ENCODE measurements at regions of chr10 and their contacts with region 1.

Region 1: DNA sequence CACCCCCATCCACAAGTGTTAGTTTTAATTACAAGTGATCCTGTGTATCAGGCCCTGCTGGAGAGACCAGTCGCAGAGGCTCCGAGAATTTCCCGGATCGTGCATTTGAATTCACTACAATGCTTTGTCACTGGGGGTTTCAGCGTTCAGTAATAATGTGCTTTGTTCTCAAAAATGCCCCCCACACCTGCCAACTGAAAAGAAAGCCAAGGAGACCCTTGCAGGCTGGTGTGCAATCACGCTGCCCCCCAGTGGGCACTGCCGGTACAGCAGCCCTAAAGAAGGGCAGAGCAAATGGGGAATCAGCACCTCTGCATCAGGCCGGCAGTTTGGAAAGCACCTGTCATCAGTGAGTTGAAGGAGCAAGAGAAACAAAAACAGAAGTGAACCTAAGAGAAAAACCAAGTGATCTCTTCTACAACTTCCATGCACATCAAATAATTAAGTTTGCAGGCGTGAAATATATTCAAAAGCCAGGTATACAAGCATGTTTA is 177.6 kb downstream of the PARD3 start:
- DNase-seq: no peak
- H3K4me3 ChIP-seq: no peak overlapping the region
- H3K27me3 ChIP-seq: no peaks in the 10 kb centered on the region
- CTCF ChIP-seq: peak; percentile 99

Region 2: DNA sequence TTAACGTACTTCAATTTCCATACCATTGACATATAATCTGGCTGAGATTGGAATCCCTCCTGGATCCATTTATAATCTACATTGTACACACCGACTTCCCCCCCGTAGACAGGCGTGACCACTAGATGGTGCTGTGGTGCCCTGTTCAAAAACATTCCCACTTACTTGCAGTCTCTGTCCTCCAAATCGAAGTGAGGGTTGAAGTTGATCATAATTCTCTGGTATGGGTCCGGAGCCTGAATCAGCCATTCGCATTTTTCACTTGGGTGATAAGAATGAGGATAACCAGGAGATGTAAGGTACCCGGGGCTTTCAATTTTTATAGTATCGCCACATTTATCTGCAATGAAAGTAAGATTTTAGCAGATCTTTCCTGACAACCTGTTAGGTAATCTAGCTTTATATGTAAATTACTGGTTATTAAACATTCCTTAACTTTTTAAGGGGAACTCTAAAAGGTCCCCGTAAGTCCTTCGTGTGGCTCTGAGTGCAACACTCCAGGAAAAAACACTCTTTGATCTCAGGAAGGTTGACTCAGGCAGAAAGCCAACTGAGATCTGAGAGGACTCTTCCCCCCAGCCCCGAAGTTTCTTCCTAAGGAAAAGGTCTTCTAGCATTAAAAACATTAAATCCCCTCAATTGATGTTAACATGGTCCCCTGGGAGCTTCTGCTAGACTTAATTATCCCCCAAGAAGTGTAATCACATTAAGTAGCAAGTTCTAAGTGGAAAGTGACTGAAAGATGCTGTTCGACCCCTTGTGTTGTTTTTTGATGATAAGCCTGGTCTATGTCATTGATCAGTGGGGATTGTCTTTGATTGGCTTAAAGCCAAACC is 1306.7 kb before region 1 on chr10:
- CTCF ChIA-PET with region 1: interaction called, 16 read pairs
- POLR2A ChIA-PET with region 1: no interaction called
- DNase-seq: no peak
- H3K4me3 ChIP-seq: peak overlapping the region; percentile 95
- H3K27me3 ChIP-seq: no peaks in the 10 kb centered on the region
- CTCF ChIP-seq: peak; percentile 89

Region 3: GRCh38 chr10:34319197-34319866 is 318.1 kb before region 1 on chr10:
- CTCF ChIA-PET with region 1: interaction called, 10 read pairs
- POLR2A ChIA-PET with region 1: no interaction called
- DNase-seq: peak; percentile 73
- H3K4me3 ChIP-seq: no peak overlapping the region
- H3K27me3 ChIP-seq: no peaks in the 10 kb centered on the region
- CTCF ChIP-seq: no peak

Region 4: GRCh38 chr10:34462056-34462455 is 175.4 kb before region 1 on chr10:
- CTCF ChIA-PET with region 1: no interaction called
- POLR2A ChIA-PET with region 1: no interaction called
- DNase-seq: no peak
- H3K4me3 ChIP-seq: no peak overlapping the region
- H3K27me3 ChIP-seq: no peaks in the 10 kb centered on the region
- CTCF ChIP-seq: no peak

Region 5: GRCh38 chr10:34526758-34527730 is 110.4 kb before region 1 on chr10:
- CTCF ChIA-PET with region 1: interaction called, 13 read pairs
- POLR2A ChIA-PET with region 1: no interaction called
- DNase-seq: peak; percentile 90
- H3K4me3 ChIP-seq: no peak overlapping the region; the same call in 1 of the 2 replicates
- H3K27me3 ChIP-seq: no peaks in the 10 kb centered on the region
- CTCF ChIP-seq: no peak

Region 6: DNA sequence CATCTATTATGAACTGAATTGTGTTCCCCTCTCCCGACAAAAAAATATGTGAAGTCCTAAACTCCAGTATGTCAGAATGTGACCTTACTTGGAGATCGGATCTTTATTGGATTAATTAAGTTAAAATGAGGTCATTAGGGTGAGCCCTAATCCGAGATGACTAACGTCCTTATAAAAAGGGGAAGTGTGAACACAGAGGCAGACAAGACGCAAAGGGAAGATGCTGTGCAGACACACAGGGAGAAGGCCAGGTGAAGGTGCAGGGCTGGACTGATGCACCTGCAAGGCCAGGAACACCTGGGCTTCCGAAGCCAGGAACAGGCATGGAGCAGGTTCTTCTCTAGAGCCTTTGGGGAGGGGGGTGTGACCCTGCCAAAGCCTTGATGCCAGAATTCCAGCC is 10.1 kb before region 1 on chr10:
- CTCF ChIA-PET with region 1: interaction called, 11 read pairs
- POLR2A ChIA-PET with region 1: no interaction called
- DNase-seq: no peak
- H3K4me3 ChIP-seq: no peak overlapping the region
- H3K27me3 ChIP-seq: no peaks in the 10 kb centered on the region
- CTCF ChIP-seq: no peak

Region 7: GRCh38 chr10:34650156-34650555 is 12.7 kb after region 1 on chr10:
- CTCF ChIA-PET with region 1: interaction called, 11 read pairs
- POLR2A ChIA-PET with region 1: no interaction called
- DNase-seq: no peak
- H3K4me3 ChIP-seq: no peak overlapping the region
- H3K27me3 ChIP-seq: no peaks in the 10 kb centered on the region
- CTCF ChIP-seq: no peak